ENCODE measurements at regions of chr21 and their contacts with region 1.

Region 1: DNA sequence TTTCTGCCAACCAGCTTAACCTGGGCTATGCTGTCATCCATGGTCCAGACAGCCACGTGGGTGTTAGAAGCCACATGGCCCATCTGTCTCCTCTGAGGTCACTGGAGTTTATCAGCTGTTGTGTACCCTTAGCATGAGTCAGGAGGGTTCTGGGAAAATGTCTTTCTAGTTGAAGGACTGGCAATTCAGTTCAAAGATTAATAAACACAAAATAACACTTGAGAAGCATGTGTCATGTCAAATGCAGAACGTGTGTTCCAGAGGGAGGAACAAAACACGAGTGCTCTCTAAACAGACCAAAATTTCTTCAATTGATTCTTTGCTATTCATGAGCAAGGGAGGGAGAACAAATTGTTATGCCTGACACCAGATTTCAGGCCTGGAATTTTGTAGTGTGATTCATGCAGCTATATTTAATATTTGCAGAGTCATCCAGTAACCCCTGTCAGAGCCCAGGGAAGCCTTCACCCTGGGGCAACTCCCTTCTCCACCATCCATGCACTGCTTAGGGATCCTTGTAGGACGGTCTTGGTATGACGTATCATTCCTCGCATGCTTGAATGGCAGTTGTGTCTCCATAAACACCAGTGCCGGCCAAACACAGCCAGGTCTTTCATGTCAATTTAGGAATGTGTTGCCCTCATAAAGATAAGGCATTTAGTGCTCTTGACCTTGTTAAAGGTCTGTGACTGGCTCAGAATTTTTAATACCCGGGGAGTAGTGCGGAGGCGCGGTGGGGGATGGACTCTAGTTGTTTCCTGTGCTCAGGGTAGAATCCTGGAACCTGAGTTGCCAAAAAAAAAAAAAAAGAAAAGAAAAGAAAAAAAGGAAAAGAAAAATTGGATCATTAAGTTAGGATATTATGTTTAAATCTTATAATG is 27.7 kb upstream of the DYRK1A start:
- DNase-seq: no peak
- H3K4me3 ChIP-seq: peak overlapping the region in 1 of 4 donors; percentile 14
- H3K27ac ChIP-seq: peak overlapping the region; percentile 77 to 83 (median 82)
- H3K4me1 ChIP-seq: peaks cover 19 to 21% (median 19%) of the 10 kb centered on the region in 4 donors
- H3K27me3 ChIP-seq: no peaks in the 10 kb centered on the region
- CTCF ChIP-seq: no peak
- EP300 ChIP-seq: no peak
- POLR2A ChIP-seq: no peak

Region 2: GRCh38 chr21:37273911-37274690 is 64.8 kb before region 1 on chr21:
- intact Hi-C with region 1: loop called (anchors 5 kb)
- DNase-seq: no peak
- H3K4me3 ChIP-seq: no peak overlapping the region
- H3K27ac ChIP-seq: no peak overlapping the region
- H3K4me1 ChIP-seq: no peaks in the 10 kb centered on the region
- H3K27me3 ChIP-seq: no peaks in the 10 kb centered on the region
- CTCF ChIP-seq: no peak
- EP300 ChIP-seq: no peak
- POLR2A ChIP-seq: no peak